ENCODE measurements at regions of chr16 and their contacts with region 1.

Region 1: DNA sequence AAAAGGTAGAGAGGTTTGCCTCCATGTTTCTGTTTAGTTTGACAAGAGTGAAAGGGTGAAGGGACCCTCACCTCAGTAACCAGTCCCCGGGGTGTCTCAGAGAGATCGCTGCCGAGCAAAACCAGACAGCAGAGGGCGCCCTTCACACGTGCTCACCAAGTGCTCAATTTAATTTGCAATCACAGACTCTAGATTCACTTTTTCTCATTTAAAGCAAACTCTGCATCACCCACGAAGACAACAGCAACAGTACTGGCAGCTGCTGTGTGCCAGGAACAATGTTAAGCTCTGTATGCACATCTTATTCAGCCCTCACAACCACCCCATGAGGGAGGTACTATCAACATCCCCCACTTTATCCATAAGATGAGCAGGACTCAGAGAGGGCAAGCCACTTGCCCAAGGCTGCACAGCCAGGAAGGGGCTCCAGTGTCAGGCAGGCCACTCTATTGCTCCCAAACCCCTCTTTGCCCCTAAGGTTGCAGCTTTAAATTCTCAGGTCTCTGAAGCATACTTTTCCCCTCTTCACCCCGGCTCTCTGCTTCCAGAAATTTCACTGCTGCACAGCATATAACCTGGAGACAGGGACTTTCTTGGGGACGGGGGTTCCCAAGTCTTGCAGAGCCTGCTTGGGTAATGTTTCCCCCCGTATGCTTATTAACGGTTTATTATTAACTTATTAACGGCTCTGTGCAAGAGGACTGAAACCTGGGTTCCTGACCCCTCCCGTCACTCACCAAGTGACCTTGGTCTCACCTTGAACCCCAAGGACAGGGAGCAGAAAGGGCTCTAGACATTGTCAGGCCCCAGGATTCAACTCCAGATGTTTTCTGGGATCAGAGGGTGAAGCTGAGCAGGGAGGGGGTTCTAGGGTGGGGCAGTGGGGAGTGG is 70.9 kb downstream of the CNGB1 start:
- DNase-seq: peak; percentile 70 to 89
- ATAC-seq: peak; percentile 75 to 92 (median 82)
- H3K4me3 ChIP-seq: no peak overlapping the region
- H3K4me3 Mint-ChIP-seq: no peak overlapping the region
- H3K27ac ChIP-seq: no peak overlapping the region
- H3K27ac Mint-ChIP-seq: peak overlapping the region in 1 of 2 donors; percentile 29
- H3K4me1 ChIP-seq: no peaks in the 10 kb centered on the region
- H3K4me1 Mint-ChIP-seq: peaks cover 7 to 8% of the 10 kb centered on the region in 2 donors
- H3K27me3 ChIP-seq: no peaks in the 10 kb centered on the region
- H3K27me3 Mint-ChIP-seq: peaks cover 0 to 6% of the 10 kb centered on the region in 2 donors
- CTCF ChIP-seq: peak; percentile 87

Region 2: DNA sequence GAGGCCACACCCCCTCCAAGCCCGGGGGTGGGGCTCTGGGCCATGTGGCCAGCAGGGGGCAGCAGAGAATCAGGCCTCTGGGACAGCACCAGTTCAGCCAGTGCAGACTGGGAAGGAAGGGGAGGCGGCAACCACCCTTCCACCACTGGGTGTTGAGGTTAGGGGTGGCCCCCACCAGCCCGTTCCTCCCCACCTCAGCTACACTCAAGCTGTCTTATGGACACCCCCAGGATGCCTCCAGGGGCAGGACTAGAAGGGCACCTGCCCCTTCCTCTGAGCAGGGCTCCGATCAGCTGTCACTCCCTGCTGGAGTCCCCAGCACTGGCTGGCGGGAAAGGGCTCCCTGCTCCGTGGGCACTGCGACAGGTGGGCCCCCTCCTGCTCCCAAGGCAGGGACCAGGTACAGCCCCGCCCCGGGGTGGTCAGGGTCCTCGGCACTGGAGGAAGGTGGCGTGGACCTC is 142.7 kb before region 1 on chr16:
- intact Hi-C with region 1: loop called (anchors 5 kb)
- DNase-seq: peak; percentile 90 to 96
- ATAC-seq: peak; percentile 93 to 96 (median 94)
- H3K4me3 ChIP-seq: no peak overlapping the region
- H3K4me3 Mint-ChIP-seq: no peak overlapping the region
- H3K27ac ChIP-seq: peak overlapping the region; percentile 48
- H3K27ac Mint-ChIP-seq: peak overlapping the region; percentile 22 to 46
- H3K4me1 ChIP-seq: peaks cover 30% of the 10 kb centered on the region
- H3K4me1 Mint-ChIP-seq: peaks cover 4 to 7% of the 10 kb centered on the region in 2 donors
- H3K27me3 ChIP-seq: no peaks in the 10 kb centered on the region
- H3K27me3 Mint-ChIP-seq: no peaks in the 10 kb centered on the region
- CTCF ChIP-seq: peak; percentile 91

Region 3: DNA sequence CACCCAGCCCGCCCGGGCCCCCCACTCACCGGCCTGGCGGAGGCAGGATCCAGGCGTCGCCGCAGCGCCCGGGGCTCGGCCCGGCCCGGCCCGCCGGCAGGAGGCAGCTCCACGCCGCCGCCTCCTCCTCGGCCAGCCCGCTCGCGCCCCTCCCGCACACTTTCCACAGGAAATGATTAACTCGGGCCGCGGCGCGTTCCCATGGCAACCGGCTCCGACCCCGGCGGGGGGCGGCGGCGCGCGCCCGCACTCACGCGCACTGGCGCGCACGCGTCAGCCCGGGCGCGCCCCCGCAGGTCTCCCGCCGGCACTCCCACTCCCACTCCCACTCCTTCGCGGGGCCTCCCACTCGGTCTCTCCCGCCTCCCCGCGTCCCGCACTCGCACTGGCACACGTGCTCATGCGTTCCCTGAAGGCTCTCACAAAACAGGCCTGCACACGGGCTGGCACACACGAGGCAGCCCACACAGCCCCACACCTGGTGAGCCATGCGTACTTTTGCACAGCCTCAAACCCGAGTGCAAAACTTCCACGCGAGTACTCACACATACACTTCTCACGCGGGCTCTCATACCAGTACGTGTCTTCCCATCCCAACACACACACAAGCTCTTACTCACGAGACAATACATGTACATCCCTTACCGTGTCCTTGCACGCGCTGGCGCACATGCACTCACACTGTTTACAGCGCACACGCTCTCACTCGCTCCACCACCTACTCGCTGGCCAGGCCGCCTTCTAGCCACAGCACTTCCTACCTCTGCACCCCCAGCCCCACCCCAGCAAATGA is 97.5 kb before region 1 on chr16 and contains the start of gene KIFC3:
- intact Hi-C with region 1: loop called (anchors 10 kb)
- DNase-seq: peak; percentile 81 to 86
- ATAC-seq: peak; percentile 83 to 90 (median 88)
- H3K4me3 ChIP-seq: peak within 1 kb of the TSS; percentile 39
- H3K4me3 Mint-ChIP-seq: peak within 1 kb of the TSS; percentile 98
- H3K27ac ChIP-seq: peak within 1 kb of the TSS; percentile 28
- H3K27ac Mint-ChIP-seq: peak within 1 kb of the TSS; percentile 91 to 96
- H3K4me1 ChIP-seq: peaks cover 45% of the 10 kb centered on the region
- H3K4me1 Mint-ChIP-seq: peaks cover 43 to 48% of the 10 kb centered on the region in 2 donors
- H3K27me3 ChIP-seq: no peaks in the 10 kb centered on the region
- H3K27me3 Mint-ChIP-seq: no peaks in the 10 kb centered on the region
- CTCF ChIP-seq: peak; percentile 23
- total RNA-seq, gene KIFC3: 54.2 to 106 (median 84.9) TPM

Region 4: DNA sequence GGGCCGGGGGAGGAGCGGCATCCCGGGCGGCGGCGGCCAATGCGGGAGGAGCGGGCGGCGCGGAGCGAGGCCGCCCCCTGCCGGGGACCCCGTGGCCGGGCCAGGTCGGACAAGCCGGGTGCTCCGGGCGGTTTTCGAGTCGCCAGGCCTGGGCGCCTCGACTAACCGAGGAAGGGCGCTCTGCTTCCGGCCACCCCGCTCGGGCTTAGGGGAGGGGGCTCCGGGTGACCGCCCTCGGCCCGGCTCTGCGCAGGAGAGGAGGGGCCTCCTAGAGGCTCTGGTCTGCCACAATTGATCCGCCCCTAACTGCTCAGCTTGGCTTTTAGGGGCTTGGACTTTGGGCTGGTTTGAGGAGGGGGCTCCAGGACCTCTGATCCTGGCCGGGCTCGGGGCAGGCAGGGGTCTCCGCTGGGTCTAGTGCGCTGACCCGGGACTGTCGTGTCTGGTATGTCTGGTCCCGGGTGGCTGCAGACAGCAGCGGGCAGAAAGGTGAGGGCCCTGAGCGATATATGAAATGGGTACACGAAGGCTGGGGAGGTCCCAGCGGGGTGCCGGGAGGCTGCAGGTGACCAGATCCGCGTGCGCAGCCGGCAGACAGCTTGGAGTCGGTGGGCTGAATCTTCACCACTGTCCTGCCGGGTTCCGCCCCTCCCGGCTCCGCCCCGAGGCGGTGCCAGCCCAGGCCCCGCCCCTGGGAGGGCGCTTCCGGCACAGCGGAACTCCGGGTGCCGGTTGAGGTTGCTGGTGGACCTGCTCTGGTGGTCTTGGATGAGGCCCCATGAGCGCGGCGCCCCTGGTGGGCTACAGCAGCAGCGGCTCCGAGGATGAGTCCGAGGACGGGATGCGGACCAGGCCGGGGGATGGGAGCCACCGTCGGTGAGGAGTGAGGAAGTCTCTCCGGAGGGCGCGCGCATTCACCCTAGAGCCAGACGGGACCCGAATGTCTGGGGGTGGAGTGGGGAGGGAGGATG is 101.0 kb after region 1 on chr16 and contains the start of gene USB1:
- intact Hi-C with region 1: loop called (anchors 1 kb)
- DNase-seq: peak; percentile 91 to 92
- ATAC-seq: peak; percentile 78 to 92 (median 80)
- H3K4me3 ChIP-seq: peak within 1 kb of the TSS; percentile 84
- H3K4me3 Mint-ChIP-seq: peak within 1 kb of the TSS; percentile 92
- H3K27ac ChIP-seq: peak within 1 kb of the TSS; percentile 86
- H3K27ac Mint-ChIP-seq: peak within 1 kb of the TSS; percentile 86 to 90
- H3K4me1 ChIP-seq: peaks cover 56% of the 10 kb centered on the region
- H3K4me1 Mint-ChIP-seq: peaks cover 55 to 64% of the 10 kb centered on the region in 2 donors
- H3K27me3 ChIP-seq: no peaks in the 10 kb centered on the region
- H3K27me3 Mint-ChIP-seq: no peaks in the 10 kb centered on the region
- CTCF ChIP-seq: peak; percentile 81
- total RNA-seq, gene USB1: 64.7 to 86.0 (median 84.8) TPM

Region 5: DNA sequence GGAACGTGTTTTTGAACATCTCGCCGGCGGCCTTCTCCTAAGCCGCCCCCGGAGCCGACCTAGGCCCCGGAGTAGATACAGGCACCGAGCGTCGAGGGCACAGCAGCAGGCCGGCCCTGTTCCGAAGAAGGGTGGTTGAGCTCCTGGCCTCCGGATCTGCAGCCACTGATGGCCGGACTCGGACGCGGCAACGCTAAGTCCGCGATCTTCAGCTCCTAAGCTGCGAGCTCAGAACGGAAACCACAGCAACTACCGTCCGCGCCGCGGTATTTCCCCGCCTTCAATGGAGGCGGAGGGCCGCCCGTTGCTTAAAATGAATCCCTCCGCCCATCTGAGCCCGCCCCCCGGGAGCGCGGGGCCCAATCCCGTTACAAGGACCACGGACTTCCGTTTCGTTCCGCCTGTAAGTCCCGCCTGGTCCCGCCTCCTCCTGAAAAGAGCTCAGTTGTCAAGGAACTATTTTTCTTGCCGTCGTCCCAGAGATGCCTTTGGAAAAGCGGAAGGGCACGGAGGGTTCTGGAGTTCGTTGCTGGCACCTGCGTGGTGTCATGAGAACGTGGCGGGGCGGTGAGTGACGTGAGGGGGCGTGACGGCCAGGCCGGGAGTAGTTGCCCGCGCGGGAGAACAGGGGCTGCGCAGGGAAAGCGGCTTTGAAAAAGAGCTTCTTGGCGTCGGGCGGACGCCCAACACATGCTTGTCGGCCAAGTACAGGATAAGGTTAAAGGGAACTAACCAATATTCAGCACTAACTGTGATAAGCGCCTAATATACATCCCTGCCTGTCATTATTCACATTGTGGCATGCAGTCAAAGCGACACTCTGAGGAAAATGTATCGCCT is 229.3 kb after region 1 on chr16 and contains the start of gene CFAP20:
- intact Hi-C with region 1: loop called (anchors 10 kb)
- DNase-seq: peak; percentile 94 to 98
- ATAC-seq: peak; percentile 86 to 95 (median 94)
- H3K4me3 ChIP-seq: peak within 1 kb of the TSS; percentile 94
- H3K4me3 Mint-ChIP-seq: peak within 1 kb of the TSS; percentile 99
- H3K27ac ChIP-seq: peak within 1 kb of the TSS; percentile 88
- H3K27ac Mint-ChIP-seq: peak within 1 kb of the TSS; percentile 93 to 95
- H3K4me1 ChIP-seq: peaks cover 25% of the 10 kb centered on the region
- H3K4me1 Mint-ChIP-seq: peaks cover 42% of the 10 kb centered on the region in 2 donors
- H3K27me3 ChIP-seq: no peaks in the 10 kb centered on the region
- H3K27me3 Mint-ChIP-seq: no peaks in the 10 kb centered on the region
- CTCF ChIP-seq: no peak
- total RNA-seq, gene CFAP20: 57.9 to 137 (median 64.7) TPM